ENCODE measurements at regions of chr10 and their contacts with region 1.

Region 1: DNA sequence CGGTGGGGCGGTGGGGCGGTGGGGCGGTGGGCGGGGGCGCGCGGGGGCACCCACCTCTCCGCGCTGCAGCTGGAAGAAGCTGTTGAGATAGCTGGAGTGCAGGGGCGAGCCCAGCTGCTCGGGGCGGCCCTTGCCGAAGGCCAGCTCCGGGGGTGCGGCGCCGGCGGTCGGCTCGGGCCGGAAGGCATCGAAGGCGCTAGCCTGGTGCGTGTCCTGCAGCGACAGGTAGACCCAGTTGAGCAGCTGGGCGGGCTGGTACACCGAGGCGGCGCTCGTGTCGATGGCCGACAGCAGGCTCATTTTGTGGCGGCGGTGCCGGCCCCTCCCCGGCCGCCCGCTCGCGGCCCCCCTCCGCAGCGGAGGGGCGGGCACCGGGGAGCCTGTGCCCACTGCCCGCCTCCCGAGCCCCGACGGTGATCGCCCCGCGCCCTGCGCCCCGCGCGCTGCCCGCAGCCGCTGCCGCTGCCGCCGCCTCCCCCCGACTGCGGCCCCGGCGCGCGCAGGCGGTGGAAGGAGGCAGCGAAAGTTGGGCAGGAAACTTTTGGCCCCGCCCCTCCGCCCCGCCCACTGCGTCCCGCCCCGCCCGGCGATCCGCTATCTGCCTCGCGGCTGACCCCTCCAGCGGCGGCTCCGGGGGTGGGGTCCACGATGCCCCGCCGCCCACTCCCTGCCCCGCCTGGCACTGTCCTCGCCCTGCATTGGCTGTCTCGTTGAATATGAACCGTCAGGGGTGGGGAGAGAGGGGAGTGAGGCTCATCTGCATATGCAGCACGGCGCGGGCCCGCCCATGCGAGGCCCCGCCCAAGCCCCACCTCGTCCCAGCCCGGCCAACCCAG is at the start of gene ZCCHC24:
- DNase-seq: peak; percentile 91
- H3K4me3 Mint-ChIP-seq: peak within 1 kb of the TSS; percentile 87
- H3K27ac Mint-ChIP-seq: peak within 1 kb of the TSS; percentile 68
- H3K4me1 Mint-ChIP-seq: peaks cover 21% of the 10 kb centered on the region
- H3K27me3 Mint-ChIP-seq: peaks cover 56% of the 10 kb centered on the region
- total RNA-seq, gene ZCCHC24: 0.52 and 0.59 TPM in 2 replicates

Region 2: GRCh38 chr10:78029269-78030226 is 1415.8 kb before region 1 on chr10 and contains the start of gene POLR3A:
- intact Hi-C with region 1: loop called (anchors 5 kb)
- DNase-seq: peak; percentile 89
- H3K4me3 Mint-ChIP-seq: peak within 1 kb of the TSS; percentile 99
- H3K27ac Mint-ChIP-seq: peak within 1 kb of the TSS; percentile 91
- H3K4me1 Mint-ChIP-seq: peaks cover 28% of the 10 kb centered on the region
- H3K27me3 Mint-ChIP-seq: no peaks in the 10 kb centered on the region
- total RNA-seq, gene POLR3A: 29.5 and 30.8 TPM in 2 replicates

Region 3: GRCh38 chr10:78579995-78580394 is 865.4 kb before region 1 on chr10:
- intact Hi-C with region 1: loop called (anchors 5 kb)
- DNase-seq: no peak
- H3K4me3 Mint-ChIP-seq: no peak overlapping the region
- H3K27ac Mint-ChIP-seq: peak overlapping the region; percentile 92
- H3K4me1 Mint-ChIP-seq: peaks cover 17% of the 10 kb centered on the region
- H3K27me3 Mint-ChIP-seq: no peaks in the 10 kb centered on the region

Region 4: GRCh38 chr10:79242620-79243152 is 202.7 kb before region 1 on chr10:
- intact Hi-C with region 1: loop called (anchors 1 kb)
- DNase-seq: peak; percentile 65
- H3K4me3 Mint-ChIP-seq: peak overlapping the region; percentile 81
- H3K27ac Mint-ChIP-seq: peak overlapping the region; percentile 83
- H3K4me1 Mint-ChIP-seq: peaks cover 71% of the 10 kb centered on the region
- H3K27me3 Mint-ChIP-seq: no peaks in the 10 kb centered on the region

Region 5: GRCh38 chr10:79310200-79310865 is 135.0 kb before region 1 on chr10:
- intact Hi-C with region 1: no loop called
- DNase-seq: no peak
- H3K4me3 Mint-ChIP-seq: no peak overlapping the region
- H3K27ac Mint-ChIP-seq: peak overlapping the region; percentile 59
- H3K4me1 Mint-ChIP-seq: peaks cover 12% of the 10 kb centered on the region
- H3K27me3 Mint-ChIP-seq: peaks cover 1% of the 10 kb centered on the region

Region 6: GRCh38 chr10:79374312-79375191 is 70.8 kb before region 1 on chr10:
- intact Hi-C with region 1: loop called (anchors 1 kb)
- DNase-seq: peak; percentile 55
- H3K4me3 Mint-ChIP-seq: no peak overlapping the region
- H3K27ac Mint-ChIP-seq: no peak overlapping the region
- H3K4me1 Mint-ChIP-seq: peaks cover 9% of the 10 kb centered on the region
- H3K27me3 Mint-ChIP-seq: peaks cover 28% of the 10 kb centered on the region

Region 7: DNA sequence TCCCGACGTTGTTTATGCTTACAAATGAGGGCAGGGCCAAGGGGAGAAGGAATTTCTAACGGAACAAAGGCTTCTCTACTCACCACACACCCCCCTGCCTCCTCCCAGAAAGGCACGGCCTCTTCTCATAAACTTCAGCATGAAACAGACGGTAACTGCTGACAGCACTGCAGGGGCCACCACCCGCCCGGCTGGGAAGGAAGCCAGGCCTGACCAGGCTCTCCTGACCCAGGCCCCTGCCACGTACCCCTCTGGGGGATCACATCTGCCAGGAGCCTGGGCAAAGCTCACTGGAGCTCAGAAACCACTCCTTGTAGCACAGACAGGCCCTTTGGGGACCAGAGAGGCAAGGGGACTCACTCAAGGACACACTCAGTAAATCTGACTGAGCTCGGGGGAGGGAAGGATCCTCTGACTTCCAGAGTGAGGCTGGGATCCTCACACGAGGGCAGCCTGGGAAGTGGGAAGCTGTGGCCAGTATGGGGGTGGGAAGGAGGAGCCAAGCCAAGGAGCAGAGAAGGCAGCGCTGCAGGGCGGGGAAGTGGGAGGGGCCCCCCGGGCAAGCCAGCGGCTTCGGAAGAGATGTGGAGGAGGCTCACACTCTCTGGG is 46.0 kb before region 1 on chr10:
- intact Hi-C with region 1: no loop called
- DNase-seq: no peak
- H3K4me3 Mint-ChIP-seq: no peak overlapping the region
- H3K27ac Mint-ChIP-seq: no peak overlapping the region
- H3K4me1 Mint-ChIP-seq: no peaks in the 10 kb centered on the region
- H3K27me3 Mint-ChIP-seq: peaks cover 7% of the 10 kb centered on the region

Region 8: DNA sequence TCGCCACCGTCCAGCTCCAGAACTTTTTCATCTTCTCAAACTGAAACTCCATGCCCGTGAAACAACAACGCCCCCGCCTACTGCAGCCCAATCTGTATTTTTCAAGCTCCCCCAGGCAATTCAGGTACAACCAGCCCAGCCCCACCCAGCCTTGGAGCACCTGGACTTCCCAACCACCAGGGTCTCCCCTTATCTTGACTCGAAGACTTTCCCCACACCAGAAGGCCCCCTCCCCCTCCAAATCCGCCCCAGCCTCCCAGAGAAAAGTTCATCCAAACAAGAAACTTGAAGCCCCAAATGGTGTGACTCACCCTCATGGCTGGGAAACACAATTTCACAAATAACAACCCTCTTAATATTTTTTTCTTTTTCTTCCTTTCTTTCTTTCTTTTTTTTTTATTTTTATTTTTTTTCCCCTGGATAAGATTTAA is 10.5 kb before region 1 on chr10:
- intact Hi-C with region 1: loop called (anchors 1 kb)
- DNase-seq: no peak
- H3K4me3 Mint-ChIP-seq: no peak overlapping the region
- H3K27ac Mint-ChIP-seq: peak overlapping the region; percentile 56
- H3K4me1 Mint-ChIP-seq: peaks cover 11% of the 10 kb centered on the region
- H3K27me3 Mint-ChIP-seq: peaks cover 5% of the 10 kb centered on the region

Region 9: DNA sequence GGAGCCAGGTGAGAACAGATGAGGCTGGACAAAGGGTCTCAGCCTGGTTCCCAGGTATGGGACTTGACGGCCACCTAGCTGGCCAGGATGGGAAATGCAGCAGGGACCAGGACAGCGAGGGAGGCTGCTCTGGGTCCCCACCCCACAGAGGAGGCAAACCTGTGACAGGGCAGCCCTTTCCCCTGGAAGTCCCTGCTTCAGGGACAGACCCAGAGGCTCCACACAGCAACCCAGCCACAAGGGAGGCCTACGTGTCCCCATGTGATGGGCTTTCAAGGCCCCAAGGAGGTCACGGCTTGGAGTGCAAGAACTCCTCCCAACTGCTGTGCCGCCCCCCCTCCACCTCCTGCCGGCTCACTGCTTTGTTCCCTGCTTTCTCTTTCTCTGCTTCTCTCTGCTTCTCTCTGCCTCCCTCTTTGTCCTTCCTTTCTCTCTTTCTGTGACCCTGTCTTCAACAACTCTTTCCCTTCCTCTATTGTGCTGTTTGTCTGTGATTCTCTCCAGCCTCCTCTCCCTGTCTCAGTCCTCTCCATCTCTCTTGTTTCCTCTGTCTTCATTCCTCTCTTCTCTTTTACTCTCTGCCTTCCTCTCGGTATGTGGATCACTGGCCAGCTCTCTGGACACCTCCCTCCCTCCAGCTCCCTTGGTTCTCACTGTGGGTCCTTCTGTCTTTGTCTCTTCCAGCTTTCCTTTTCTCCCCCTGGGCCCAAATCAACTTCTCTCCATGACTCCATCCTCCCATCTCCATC is 57.4 kb after region 1 on chr10:
- intact Hi-C with region 1: no loop called
- DNase-seq: no peak
- H3K4me3 Mint-ChIP-seq: no peak overlapping the region
- H3K27ac Mint-ChIP-seq: no peak overlapping the region
- H3K4me1 Mint-ChIP-seq: peaks cover 15% of the 10 kb centered on the region
- H3K27me3 Mint-ChIP-seq: peaks cover 31% of the 10 kb centered on the region

Region 10: DNA sequence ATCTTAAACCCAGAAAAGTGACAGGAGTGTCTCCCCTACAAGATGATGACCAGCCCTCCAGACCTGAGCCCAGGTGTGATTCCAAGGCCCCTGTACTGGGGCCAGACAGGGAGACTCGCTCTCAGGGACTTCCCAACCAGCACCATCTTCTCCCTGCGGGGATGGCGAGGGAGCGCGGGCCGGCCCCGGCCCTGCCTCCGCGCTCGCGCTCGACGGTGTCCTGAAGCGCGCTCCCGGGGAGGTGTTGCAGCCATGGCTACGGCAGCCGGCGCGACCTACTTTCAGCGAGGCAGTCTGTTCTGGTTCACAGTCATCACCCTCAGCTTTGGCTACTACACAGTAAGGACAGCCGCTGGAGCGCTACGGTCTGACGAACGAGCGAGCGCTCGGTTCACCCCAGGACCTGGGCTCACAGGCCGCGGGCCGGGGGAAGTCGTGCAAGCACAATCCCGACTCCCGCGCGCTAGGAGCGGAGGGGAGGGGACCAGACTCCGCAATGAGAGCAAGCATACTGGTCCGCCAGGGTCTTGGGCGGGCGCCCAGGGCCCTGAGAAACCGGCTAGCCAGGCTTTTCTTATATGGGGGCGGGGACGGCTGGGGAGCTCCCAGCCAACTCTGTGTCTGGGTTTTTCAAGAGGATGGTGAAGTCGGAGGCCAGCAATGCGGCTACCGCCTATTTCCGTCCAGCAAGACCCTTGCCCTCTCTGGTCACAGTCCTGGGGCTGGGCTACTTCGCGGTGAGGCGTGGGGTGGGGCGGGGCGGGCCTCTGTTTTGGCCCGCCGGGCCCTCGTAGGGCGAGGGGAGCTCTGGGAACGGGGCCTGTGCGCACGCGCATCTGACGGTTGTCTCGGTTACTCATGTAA is 633.3 kb after region 1 on chr10 and contains the start of gene TMEM254:
- intact Hi-C with region 1: loop called (anchors 1 kb)
- DNase-seq: peak; percentile 85
- H3K4me3 Mint-ChIP-seq: peak within 1 kb of the TSS; percentile 98
- H3K27ac Mint-ChIP-seq: peak within 1 kb of the TSS; percentile 92
- H3K4me1 Mint-ChIP-seq: peaks cover 29% of the 10 kb centered on the region
- H3K27me3 Mint-ChIP-seq: no peaks in the 10 kb centered on the region
- total RNA-seq, gene TMEM254: 10.8 and 12.4 TPM in 2 replicates

Measured in activated T-helper 1 cell treated with anti-CD3 and anti-CD28 coated beads, Interleukin-12 subunit alpha, Interleukin-12 subunit beta, Interleukin-2, Interleukin-4 antibody, amounts not matched to agents 30 ng/mL and 10 ng/mL and 1 ng/mL, durations not matched to agents 14 hours and 24 hours and 36 hours (primary cell).